MCF 10A (cell line): ENCODE measurements at regions of chr3 and their contacts with region 1.

Region 1: GRCh38 chr3:56667973-56668579 is 15.0 kb downstream of the TASOR start:
- DNase-seq: no peak
- H3K4me3 Mint-ChIP-seq: no peak overlapping the region
- H3K27ac Mint-ChIP-seq: peak overlapping the region; percentile 12
- H3K4me1 Mint-ChIP-seq: peaks cover 5% of the 10 kb centered on the region
- H3K27me3 Mint-ChIP-seq: no peaks in the 10 kb centered on the region
- CTCF ChIP-seq: no peak

Region 2: DNA sequence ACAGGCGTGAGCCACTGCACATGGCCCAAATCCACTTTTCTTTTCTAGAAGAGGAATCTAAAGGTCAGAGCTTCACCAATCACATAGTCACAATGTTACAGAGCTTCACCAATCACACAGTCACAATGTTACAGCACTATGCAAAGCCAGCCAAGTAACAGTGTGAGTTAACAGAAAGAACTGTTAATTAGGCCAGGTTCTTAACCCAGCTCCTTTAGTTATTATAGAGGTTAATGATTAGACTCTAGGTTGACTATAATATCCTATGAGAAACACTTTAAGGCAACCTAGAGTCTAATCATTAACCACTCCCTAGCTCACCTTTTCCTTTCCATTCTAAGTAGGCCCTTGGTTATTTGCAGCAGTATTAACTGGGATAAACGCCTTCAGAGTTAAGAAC is 39.0 kb before region 1 on chr3:
- CTCF ChIA-PET with region 1: no interaction called
- POLR2A ChIA-PET with region 1: no interaction called
- intact Hi-C with region 1: no loop called
- DNase-seq: no peak
- H3K4me3 Mint-ChIP-seq: no peak overlapping the region
- H3K27ac Mint-ChIP-seq: no peak overlapping the region
- H3K4me1 Mint-ChIP-seq: no peaks in the 10 kb centered on the region
- H3K27me3 Mint-ChIP-seq: no peaks in the 10 kb centered on the region
- CTCF ChIP-seq: no peak

Region 3: GRCh38 chr3:56682462-56683121 is 14.5 kb after region 1 on chr3:
- CTCF ChIA-PET with region 1: interaction called, 3 read pairs
- POLR2A ChIA-PET with region 1: interaction called, 13 read pairs
- intact Hi-C with region 1: no loop called
- DNase-seq: peak; percentile 79
- H3K4me3 Mint-ChIP-seq: peak overlapping the region; percentile 87
- H3K27ac Mint-ChIP-seq: peak overlapping the region; percentile 98
- H3K4me1 Mint-ChIP-seq: peaks cover 8% of the 10 kb centered on the region
- H3K27me3 Mint-ChIP-seq: no peaks in the 10 kb centered on the region
- CTCF ChIP-seq: no peak

Region 4: GRCh38 chr3:56787784-56788256 is 119.7 kb after region 1 on chr3:
- CTCF ChIA-PET with region 1: no interaction called
- POLR2A ChIA-PET with region 1: no interaction called
- intact Hi-C with region 1: no loop called
- DNase-seq: no peak
- H3K4me3 Mint-ChIP-seq: no peak overlapping the region
- H3K27ac Mint-ChIP-seq: peak overlapping the region; percentile 46
- H3K4me1 Mint-ChIP-seq: peaks cover 36% of the 10 kb centered on the region
- H3K27me3 Mint-ChIP-seq: no peaks in the 10 kb centered on the region
- CTCF ChIP-seq: no peak

Region 5: DNA sequence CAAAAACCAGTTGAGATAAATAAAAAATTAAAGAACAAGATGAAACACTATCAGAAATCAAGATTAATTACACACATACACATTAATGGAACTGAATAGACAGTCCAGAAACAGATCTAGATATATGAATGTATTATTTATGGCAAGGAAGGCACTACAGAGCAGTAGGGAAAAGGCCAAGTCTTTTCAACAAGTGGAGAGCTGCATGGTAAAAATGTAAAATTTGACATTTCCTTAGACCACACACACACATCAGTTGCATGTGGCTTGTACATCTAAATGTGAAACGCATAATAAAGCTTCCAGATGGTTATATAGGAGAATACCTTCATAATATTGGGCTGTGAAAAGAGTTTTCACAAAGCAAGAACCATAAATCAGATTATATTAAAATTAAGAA is 682.2 kb after region 1 on chr3:
- CTCF ChIA-PET with region 1: no interaction called
- POLR2A ChIA-PET with region 1: no interaction called
- intact Hi-C with region 1: no loop called
- DNase-seq: no peak
- H3K4me3 Mint-ChIP-seq: no peak overlapping the region
- H3K27ac Mint-ChIP-seq: no peak overlapping the region
- H3K4me1 Mint-ChIP-seq: no peaks in the 10 kb centered on the region
- H3K27me3 Mint-ChIP-seq: peaks cover 40% of the 10 kb centered on the region
- CTCF ChIP-seq: no peak